ENCODE measurements at regions of chr1 and their contacts with region 1.

Region 1: GRCh38 chr1:10378081-10378841 is 20.6 kb upstream of the PGD start:
- DNase-seq: peak; percentile 32
- H3K4me3 ChIP-seq: no peak overlapping the region
- H3K27ac ChIP-seq: peak overlapping the region; percentile 59
- H3K4me1 ChIP-seq: peaks cover 10% of the 10 kb centered on the region
- H3K27me3 ChIP-seq: no peaks in the 10 kb centered on the region
- CTCF ChIP-seq: no peak

Region 2: GRCh38 chr1:10170239-10170574 is 208.1 kb before region 1 on chr1:
- intact Hi-C with region 1: no loop called
- DNase-seq: no peak
- H3K4me3 ChIP-seq: no peak overlapping the region
- H3K27ac ChIP-seq: no peak overlapping the region
- H3K4me1 ChIP-seq: peaks cover 9% of the 10 kb centered on the region
- H3K27me3 ChIP-seq: no peaks in the 10 kb centered on the region
- CTCF ChIP-seq: no peak

Region 3: GRCh38 chr1:10429868-10430215 is 51.6 kb after region 1 on chr1:
- intact Hi-C with region 1: loop called (anchors 5 kb)
- DNase-seq: no peak
- H3K4me3 ChIP-seq: peak overlapping the region; percentile 95
- H3K27ac ChIP-seq: peak overlapping the region; percentile 82
- H3K4me1 ChIP-seq: peaks cover 20% of the 10 kb centered on the region
- H3K27me3 ChIP-seq: no peaks in the 10 kb centered on the region
- CTCF ChIP-seq: no peak

Measured in left ventricle myocardium inferior (tissue), 1 donor.